CD4-positive, alpha-beta T cell (primary cell): ENCODE measurements at regions of chr10 and their contacts with region 1.

Region 1: GRCh38 chr10:27223964-27224363 is 16.6 kb downstream of the ACBD5 start:
- DNase-seq: peak; percentile 11 to 79 (median 32)
- ATAC-seq: peak; percentile 68
- H3K4me3 ChIP-seq: no peak overlapping the region
- H3K4me3 Mint-ChIP-seq: no peak overlapping the region
- H3K27ac ChIP-seq: no peak overlapping the region
- H3K27ac Mint-ChIP-seq: peak overlapping the region; percentile 40
- H3K4me1 ChIP-seq: peaks cover 9% of the 10 kb centered on the region
- H3K4me1 Mint-ChIP-seq: peaks cover 15% of the 10 kb centered on the region
- H3K27me3 ChIP-seq: no peaks in the 10 kb centered on the region
- H3K27me3 Mint-ChIP-seq: no peaks in the 10 kb centered on the region
- CTCF ChIP-seq: peak; percentile 87

Region 2: GRCh38 chr10:27285108-27285507 is 61.1 kb after region 1 on chr10:
- CTCF ChIA-PET with region 1: interaction called, 11 read pairs
- POLR2A ChIA-PET with region 1: interaction called, 3 read pairs
- intact Hi-C with region 1: loop called (anchors 1 to 2 kb)
- DNase-seq: peak in 8 of 14 experiments; percentile 3 to 69 (median 36)
- ATAC-seq: peak; percentile 78
- H3K4me3 ChIP-seq: no peak overlapping the region
- H3K4me3 Mint-ChIP-seq: no peak overlapping the region
- H3K27ac ChIP-seq: no peak overlapping the region
- H3K27ac Mint-ChIP-seq: no peak overlapping the region
- H3K4me1 ChIP-seq: no peaks in the 10 kb centered on the region
- H3K4me1 Mint-ChIP-seq: no peaks in the 10 kb centered on the region
- H3K27me3 ChIP-seq: no peaks in the 10 kb centered on the region
- H3K27me3 Mint-ChIP-seq: peaks cover 4% of the 10 kb centered on the region
- CTCF ChIP-seq: peak; percentile 57

Region 3: DNA sequence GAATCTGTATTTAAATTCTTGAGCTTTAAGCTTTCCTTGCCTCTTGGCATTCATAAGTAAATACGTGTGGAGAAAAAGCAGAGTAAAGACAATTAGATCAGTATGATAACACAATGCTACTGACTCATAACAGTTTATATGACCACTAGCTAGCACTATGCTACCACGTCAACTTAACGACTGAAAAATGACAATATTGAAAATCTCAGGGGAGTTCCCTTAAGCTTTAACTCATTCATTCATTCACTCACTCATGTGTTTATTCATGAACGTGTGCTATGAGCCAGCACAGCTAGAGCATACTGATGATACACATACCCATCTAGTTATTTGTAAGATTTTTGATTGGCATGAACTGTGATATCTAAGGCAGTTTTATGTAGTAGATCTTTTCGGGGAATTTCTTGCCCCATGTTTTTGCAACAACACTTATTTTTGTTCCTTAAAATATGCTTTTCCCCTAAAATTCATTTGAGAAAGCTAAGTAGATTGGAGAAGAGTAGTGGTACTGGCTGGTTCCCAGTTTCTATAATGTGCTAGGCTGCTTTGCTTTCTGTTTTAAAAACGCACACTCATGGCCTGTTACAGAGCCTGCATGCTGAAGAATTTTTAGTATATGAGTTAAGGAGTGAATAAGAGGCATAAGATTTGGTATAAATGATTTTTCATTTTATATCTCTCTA is 74.0 kb after region 1 on chr10:
- CTCF ChIA-PET with region 1: no interaction called
- POLR2A ChIA-PET with region 1: no interaction called
- intact Hi-C with region 1: no loop called
- DNase-seq: no peak
- ATAC-seq: no peak
- H3K4me3 ChIP-seq: no peak overlapping the region
- H3K4me3 Mint-ChIP-seq: no peak overlapping the region
- H3K27ac ChIP-seq: no peak overlapping the region
- H3K27ac Mint-ChIP-seq: no peak overlapping the region
- H3K4me1 ChIP-seq: peaks cover 3% of the 10 kb centered on the region
- H3K4me1 Mint-ChIP-seq: no peaks in the 10 kb centered on the region
- H3K27me3 ChIP-seq: no peaks in the 10 kb centered on the region
- H3K27me3 Mint-ChIP-seq: peaks cover 9% of the 10 kb centered on the region
- CTCF ChIP-seq: no peak